Heart left ventricle (tissue), 16 donors: ENCODE measurements at regions of chr4 and their contacts with region 1.

Region 1: GRCh38 chr4:15805583-15806517 is 27.7 kb downstream of the CD38 start:
- DNase-seq: no peak
- ATAC-seq: peak in 3 of 4 donors; percentile 20 to 79 (median 64)
- H3K4me3 ChIP-seq: no peak overlapping the region
- H3K27ac ChIP-seq: no peak overlapping the region
- H3K4me1 ChIP-seq: peaks cover 0 to 34% (median 0%) of the 10 kb centered on the region in 12 donors
- H3K27me3 ChIP-seq: no peaks in the 10 kb centered on the region
- CTCF ChIP-seq: peak; percentile 58 to 75 (median 68)
- POLR2A ChIP-seq: no peak

Region 2: GRCh38 chr4:15836362-15836761 is 30.5 kb after region 1 on chr4:
- intact Hi-C with region 1: no loop called
- DNase-seq: no peak
- ATAC-seq: no peak
- H3K4me3 ChIP-seq: no peak overlapping the region
- H3K27ac ChIP-seq: no peak overlapping the region
- H3K4me1 ChIP-seq: peaks cover 0 to 6% (median 0%) of the 10 kb centered on the region in 12 donors
- H3K27me3 ChIP-seq: no peaks in the 10 kb centered on the region
- CTCF ChIP-seq: no peak
- POLR2A ChIP-seq: no peak

Region 3: GRCh38 chr4:15847746-15848145 is 41.9 kb after region 1 on chr4:
- intact Hi-C with region 1: no loop called
- DNase-seq: no peak
- ATAC-seq: no peak
- H3K4me3 ChIP-seq: no peak overlapping the region
- H3K27ac ChIP-seq: no peak overlapping the region
- H3K4me1 ChIP-seq: no peaks in the 10 kb centered on the region
- H3K27me3 ChIP-seq: no peaks in the 10 kb centered on the region
- CTCF ChIP-seq: no peak
- POLR2A ChIP-seq: no peak

Region 4: GRCh38 chr4:15882675-15883086 is 76.8 kb after region 1 on chr4:
- intact Hi-C with region 1: loop called in 2 of 10 experiments (anchors 2 to 5 kb)
- DNase-seq: peak in 4 of 5 donors; percentile 39 to 53 (median 42)
- ATAC-seq: peak; percentile 73 to 89 (median 85)
- H3K4me3 ChIP-seq: no peak overlapping the region
- H3K27ac ChIP-seq: no peak overlapping the region
- H3K4me1 ChIP-seq: peaks cover 0 to 3% (median 0%) of the 10 kb centered on the region in 12 donors
- H3K27me3 ChIP-seq: no peaks in the 10 kb centered on the region
- CTCF ChIP-seq: peak; percentile 74 to 92 (median 88)
- POLR2A ChIP-seq: no peak

Region 5: DNA sequence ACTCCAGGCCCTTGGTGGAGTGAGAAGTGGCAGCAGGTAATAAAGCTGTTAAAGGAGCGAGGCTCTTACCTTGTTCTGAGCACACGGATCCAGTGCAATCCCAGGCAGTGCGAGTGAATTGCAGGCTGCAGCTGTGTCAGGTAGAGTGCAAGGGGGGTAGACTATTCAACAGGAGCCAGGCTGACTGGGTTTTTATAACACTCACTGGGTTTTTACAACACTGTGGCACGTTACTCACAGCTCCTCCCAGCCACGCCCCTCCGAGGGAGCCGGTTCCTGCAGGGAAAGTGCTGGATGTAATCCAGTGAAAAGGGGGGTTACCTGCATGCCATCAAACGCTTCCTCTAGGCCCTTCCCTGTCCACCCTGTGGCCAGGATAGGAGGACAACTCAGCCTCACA is 132.3 kb after region 1 on chr4:
- intact Hi-C with region 1: no loop called
- DNase-seq: no peak
- ATAC-seq: no peak
- H3K4me3 ChIP-seq: no peak overlapping the region
- H3K27ac ChIP-seq: no peak overlapping the region
- H3K4me1 ChIP-seq: peaks cover 0 to 9% (median 0%) of the 10 kb centered on the region in 12 donors
- H3K27me3 ChIP-seq: peaks cover 0 to 6% (median 0%) of the 10 kb centered on the region in 9 donors
- CTCF ChIP-seq: no peak
- POLR2A ChIP-seq: no peak

Region 6: GRCh38 chr4:15956179-15956850 is 150.5 kb after region 1 on chr4:
- intact Hi-C with region 1: loop called (anchors 1 to 5 kb)
- DNase-seq: peak; percentile 60 to 83 (median 72)
- ATAC-seq: peak in 3 of 4 donors; percentile 85 to 92 (median 86)
- H3K4me3 ChIP-seq: no peak overlapping the region
- H3K27ac ChIP-seq: no peak overlapping the region
- H3K4me1 ChIP-seq: peaks cover 0 to 4% (median 0%) of the 10 kb centered on the region in 12 donors
- H3K27me3 ChIP-seq: no peaks in the 10 kb centered on the region
- CTCF ChIP-seq: peak; percentile 82 to 93 (median 86)
- POLR2A ChIP-seq: no peak

Region 7: DNA sequence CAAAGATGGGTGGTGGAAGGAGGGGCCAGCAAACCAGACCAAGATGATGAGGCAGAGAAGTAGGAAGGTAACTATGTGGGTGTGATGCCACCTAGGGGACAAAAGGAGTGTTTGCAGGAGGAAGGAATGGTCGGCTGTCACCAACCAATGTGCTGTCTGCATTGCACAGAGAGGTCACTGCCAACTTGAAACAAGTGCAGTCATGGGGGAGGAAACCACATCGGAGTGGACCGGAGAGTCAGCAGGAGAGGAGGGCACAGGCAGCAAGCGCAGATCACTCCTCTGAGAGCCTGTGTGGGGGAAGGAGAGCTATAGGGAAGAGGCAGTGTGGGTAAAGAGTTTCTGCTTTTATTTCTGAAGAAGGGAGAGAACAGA is 195.6 kb after region 1 on chr4:
- intact Hi-C with region 1: loop called in 9 of 10 experiments (anchors 2 to 10 kb)
- DNase-seq: peak in 4 of 5 donors; percentile 45 to 64 (median 60)
- ATAC-seq: peak; percentile 70 to 97 (median 92)
- H3K4me3 ChIP-seq: no peak overlapping the region
- H3K27ac ChIP-seq: no peak overlapping the region
- H3K4me1 ChIP-seq: peaks cover 0 to 13% (median 0%) of the 10 kb centered on the region in 12 donors
- H3K27me3 ChIP-seq: no peaks in the 10 kb centered on the region
- CTCF ChIP-seq: peak; percentile 75 to 89 (median 82)
- POLR2A ChIP-seq: no peak

Region 8: DNA sequence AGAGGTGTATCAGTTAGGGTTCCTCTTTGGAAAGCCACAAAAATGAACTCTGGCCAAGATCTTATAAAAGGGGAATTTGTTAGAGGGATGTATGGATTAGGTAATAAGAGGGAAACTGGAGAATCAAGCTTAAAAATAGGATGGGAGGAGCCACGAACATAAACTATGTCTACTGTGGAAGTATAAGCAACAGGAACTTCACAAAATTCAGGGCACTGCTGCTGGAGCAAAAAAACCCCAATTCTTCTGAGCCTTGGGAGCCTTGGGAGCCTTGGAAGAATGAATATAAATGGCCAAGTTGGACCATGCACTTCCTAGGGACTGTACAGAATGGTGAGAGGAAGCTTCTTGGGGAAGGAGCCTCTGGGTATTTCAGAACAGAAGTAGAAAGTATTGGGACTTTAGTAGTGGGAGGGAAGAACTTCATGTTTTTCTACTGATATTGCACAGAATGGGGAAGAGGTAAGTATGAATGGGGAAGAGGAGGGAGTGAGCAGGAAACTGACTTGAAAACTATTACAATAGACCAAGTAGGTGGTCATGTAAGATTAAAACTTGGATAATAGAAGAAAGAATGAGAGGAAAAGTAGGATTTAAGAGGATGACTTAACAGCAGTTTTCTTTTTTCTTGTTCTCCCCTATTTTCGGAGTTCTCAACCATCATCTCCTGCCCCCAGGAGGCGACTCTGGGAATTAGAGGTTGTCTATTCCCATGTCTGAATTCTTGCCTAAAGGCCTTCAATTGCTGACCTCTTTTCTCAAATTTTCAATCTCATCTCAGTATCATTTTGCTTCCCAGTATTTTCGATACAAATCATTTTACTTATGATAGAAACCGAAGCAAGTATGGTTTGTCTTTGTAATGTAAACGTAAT is 464.8 kb after region 1 on chr4:
- intact Hi-C with region 1: loop called in 3 of 10 experiments (anchors 10 kb)
- DNase-seq: no peak
- ATAC-seq: peak in 3 of 4 donors; percentile 29 to 69 (median 42)
- H3K4me3 ChIP-seq: no peak overlapping the region
- H3K27ac ChIP-seq: peak overlapping the region in 1 of 12 donors; percentile 72
- H3K4me1 ChIP-seq: peaks cover 0 to 19% (median 0%) of the 10 kb centered on the region in 12 donors
- H3K27me3 ChIP-seq: no peaks in the 10 kb centered on the region
- CTCF ChIP-seq: peak in 3 of 12 donors; percentile 10 to 19 (median 12)
- POLR2A ChIP-seq: no peak